ENCODE measurements at regions of chr6 and their contacts with region 1.

Region 1: GRCh38 chr6:163579880-163580295 is 165.4 kb downstream of the QKI start:
- DNase-seq: no peak
- H3K4me3 ChIP-seq: peak overlapping the region in 3 of 59 donors; percentile 6 to 19 (median 14)
- H3K27ac ChIP-seq: peak overlapping the region in 55 of 59 donors; percentile 10 to 86 (median 64)
- H3K27me3 ChIP-seq: no peaks in the 10 kb centered on the region
- CTCF ChIP-seq: peak in 29 of 56 donors; percentile 5 to 53 (median 27)

Region 2: GRCh38 chr6:163170294-163170883 is 409.5 kb before region 1 on chr6:
- intact Hi-C with region 1: loop called (anchors 5 to 10 kb)
- DNase-seq: no peak
- H3K4me3 ChIP-seq: no peak overlapping the region
- H3K27ac ChIP-seq: peak overlapping the region in 34 of 59 donors; percentile 1 to 100 (median 68)
- H3K27me3 ChIP-seq: no peaks in the 10 kb centered on the region
- CTCF ChIP-seq: peak in 55 of 56 donors; percentile 9 to 66 (median 47)

Region 3: GRCh38 chr6:163460307-163460782 is 119.5 kb before region 1 on chr6:
- intact Hi-C with region 1: loop called in 1 of 2 experiments (anchors 10 kb)
- DNase-seq: no peak
- H3K4me3 ChIP-seq: peak overlapping the region in 55 of 59 donors; percentile 0 to 58 (median 36)
- H3K27ac ChIP-seq: peak overlapping the region in 42 of 59 donors; percentile 2 to 73 (median 36)
- H3K27me3 ChIP-seq: no peaks in the 10 kb centered on the region
- CTCF ChIP-seq: no peak

Region 4: GRCh38 chr6:164085091-164086075 is 505.5 kb after region 1 on chr6:
- intact Hi-C with region 1: loop called (anchors 5 to 10 kb)
- DNase-seq: peak; percentile 21 to 95 (median 93)
- H3K4me3 ChIP-seq: peak overlapping the region in 57 of 59 donors; percentile 7 to 64 (median 44)
- H3K27ac ChIP-seq: peak overlapping the region in 58 of 59 donors; percentile 1 to 90 (median 76)
- H3K27me3 ChIP-seq: peaks cover 0 to 5% (median 0%) of the 10 kb centered on the region in 45 donors
- CTCF ChIP-seq: peak in 16 of 56 donors; percentile 7 to 36 (median 20)